ENCODE measurements at regions of chr12 and their contacts with region 1.

Region 1: DNA sequence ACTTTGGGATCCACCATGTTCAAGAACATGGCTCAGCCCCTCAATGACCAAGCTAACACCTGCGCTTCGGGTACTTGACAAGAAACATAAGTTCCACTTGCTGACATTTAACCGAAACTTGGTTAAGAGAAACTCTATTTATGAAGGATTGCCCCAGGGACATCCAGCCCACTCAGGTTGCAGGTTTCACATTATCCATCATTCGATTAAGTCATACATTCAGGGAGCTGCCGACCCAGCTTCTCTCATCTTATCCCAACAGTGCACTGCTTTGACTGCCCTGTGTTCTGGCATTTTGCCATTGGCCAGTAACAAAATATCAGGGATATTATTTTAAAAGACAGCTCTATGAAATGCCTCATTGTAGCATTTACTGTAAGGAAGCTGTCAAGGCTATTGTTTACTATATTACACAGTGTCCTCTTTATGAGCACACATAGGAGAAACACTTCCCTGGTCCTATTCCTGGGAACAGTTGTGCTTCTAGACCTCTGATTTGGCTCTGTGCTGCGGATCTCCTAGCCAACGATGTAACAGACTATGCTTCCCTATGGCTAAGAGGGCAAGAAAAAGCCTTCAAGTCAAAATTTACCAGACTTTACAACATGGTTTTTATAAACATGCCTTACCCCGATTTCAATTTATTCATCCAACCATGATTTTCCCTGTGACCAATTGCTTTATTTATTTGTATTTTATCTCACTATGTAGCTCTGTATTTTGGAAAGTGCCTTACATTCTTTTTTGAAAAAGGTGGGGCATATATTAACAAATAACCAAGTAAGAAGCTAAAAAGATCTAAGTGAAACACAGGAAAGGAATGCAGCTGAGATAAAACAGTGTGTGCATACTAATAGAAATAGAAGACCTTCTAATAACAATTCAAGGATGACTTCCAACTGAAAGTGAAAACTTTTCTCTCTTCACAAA is 109.3 kb downstream of the ITPR2 start:
- DNase-seq: no peak
- H3K4me3 ChIP-seq: peak overlapping the region in 2 of 4 donors; percentile 5 to 7
- H3K27ac ChIP-seq: peak overlapping the region; percentile 40 to 66 (median 60)
- H3K4me1 ChIP-seq: peaks cover 21 to 36% (median 29%) of the 10 kb centered on the region in 4 donors
- H3K27me3 ChIP-seq: no peaks in the 10 kb centered on the region
- CTCF ChIP-seq: no peak
- EP300 ChIP-seq: no peak
- POLR2A ChIP-seq: no peak

Region 2: DNA sequence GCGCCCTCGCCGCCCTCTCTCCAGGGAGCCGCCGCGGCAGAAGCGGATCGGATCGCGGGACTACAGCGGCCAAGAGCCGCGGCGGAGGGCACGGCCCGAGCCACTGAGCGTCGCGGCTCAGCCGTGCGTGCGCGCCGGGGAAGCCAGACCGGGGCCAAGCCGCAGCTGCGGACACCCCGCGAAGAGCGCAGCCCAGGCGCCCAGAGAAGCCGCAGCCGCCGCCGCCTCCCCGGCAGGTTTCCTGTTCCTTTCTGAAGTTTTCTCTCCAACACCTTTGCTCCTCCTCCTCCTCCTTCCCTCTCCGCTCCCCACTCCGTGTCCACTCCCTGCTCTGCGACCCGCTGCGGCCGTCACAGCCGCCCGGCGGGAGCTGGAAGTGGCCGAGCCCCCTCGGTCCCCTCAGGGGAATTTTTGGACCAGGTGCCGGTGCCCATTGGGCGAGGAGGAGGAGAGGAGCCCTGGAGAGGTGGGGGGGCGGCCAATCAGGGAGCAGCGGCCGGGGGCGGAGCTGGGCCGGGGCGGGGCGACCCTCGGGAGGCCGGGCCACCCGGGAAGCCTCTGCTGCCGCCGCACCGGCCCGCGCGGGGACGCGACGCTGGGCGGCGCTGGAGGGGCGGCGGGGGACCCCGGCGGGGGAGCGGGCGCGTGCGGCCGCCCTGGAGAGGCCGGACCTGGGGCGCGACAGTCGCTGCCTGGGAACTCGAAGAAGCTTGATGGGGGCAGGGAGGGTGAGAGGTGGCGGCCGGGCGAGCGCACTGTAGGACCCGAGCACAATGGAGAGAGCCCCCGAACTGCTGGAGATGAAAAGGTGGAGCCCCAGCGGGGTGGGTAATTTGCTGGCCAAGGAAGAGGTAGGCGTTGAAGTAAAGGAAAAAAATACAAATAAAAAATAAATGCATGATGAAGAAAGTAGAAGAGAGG is 109.4 kb after region 1 on chr12 and contains the start of gene ITPR2:
- intact Hi-C with region 1: loop called (anchors 10 kb)
- DNase-seq: peak; percentile 97
- H3K4me3 ChIP-seq: peak within 1 kb of the TSS; percentile 76 to 96 (median 94)
- H3K27ac ChIP-seq: peak within 1 kb of the TSS; percentile 95 to 98 (median 96)
- H3K4me1 ChIP-seq: peaks cover 15 to 26% (median 19%) of the 10 kb centered on the region in 4 donors
- H3K27me3 ChIP-seq: no peaks in the 10 kb centered on the region
- CTCF ChIP-seq: peak in 2 of 3 experiments; percentile 40 to 49
- EP300 ChIP-seq: no peak
- POLR2A ChIP-seq: peak; percentile 49
- total RNA-seq, gene ITPR2: 23.7 to 26.6 (median 25.4) TPM

Measured in esophagus muscularis mucosa (tissue), 4 donors.